CD4-positive, alpha-beta T cell (primary cell): ENCODE measurements at regions of chr7 and their contacts with region 1.

Region 1: DNA sequence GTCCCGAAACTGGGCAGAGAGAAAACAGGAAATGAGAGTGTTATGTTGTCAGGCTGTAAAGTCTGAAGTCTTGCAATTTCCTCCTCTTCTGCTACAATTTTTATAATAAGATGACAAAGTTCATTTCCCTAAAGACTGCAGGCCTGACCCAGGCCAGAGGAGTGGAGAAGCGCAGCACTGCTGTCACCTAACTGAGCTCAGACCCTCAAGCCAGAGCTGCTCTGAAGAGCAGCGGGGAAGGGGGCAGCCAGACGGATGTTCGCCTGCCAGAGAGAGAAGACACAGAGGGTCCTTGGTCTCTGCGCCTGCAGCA is 12.6 kb upstream of the AOAH start:
- DNase-seq: peak in 3 of 14 experiments; percentile 41 to 62 (median 58)
- ATAC-seq: peak; percentile 39
- H3K4me3 ChIP-seq: peak overlapping the region; percentile 1
- H3K4me3 Mint-ChIP-seq: no peak overlapping the region
- H3K27ac ChIP-seq: peak overlapping the region in 1 of 2 donors; percentile 4
- H3K27ac Mint-ChIP-seq: peak overlapping the region; percentile 61
- H3K4me1 ChIP-seq: peaks cover 13% of the 10 kb centered on the region
- H3K4me1 Mint-ChIP-seq: peaks cover 27% of the 10 kb centered on the region
- H3K27me3 ChIP-seq: no peaks in the 10 kb centered on the region
- H3K27me3 Mint-ChIP-seq: no peaks in the 10 kb centered on the region
- CTCF ChIP-seq: no peak

Region 2: GRCh38 chr7:36708767-36709166 is 28.1 kb before region 1 on chr7:
- CTCF ChIA-PET with region 1: no interaction called
- POLR2A ChIA-PET with region 1: no interaction called
- intact Hi-C with region 1: loop called in 1 of 2 experiments (anchors 1 kb)
- DNase-seq: no peak
- ATAC-seq: no peak
- H3K4me3 ChIP-seq: no peak overlapping the region
- H3K4me3 Mint-ChIP-seq: no peak overlapping the region
- H3K27ac ChIP-seq: no peak overlapping the region
- H3K27ac Mint-ChIP-seq: no peak overlapping the region
- H3K4me1 ChIP-seq: no peaks in the 10 kb centered on the region
- H3K4me1 Mint-ChIP-seq: peaks cover 41% of the 10 kb centered on the region
- H3K27me3 ChIP-seq: no peaks in the 10 kb centered on the region
- H3K27me3 Mint-ChIP-seq: no peaks in the 10 kb centered on the region
- CTCF ChIP-seq: no peak

Region 3: GRCh38 chr7:36777062-36777461 is 40.2 kb after region 1 on chr7:
- CTCF ChIA-PET with region 1: no interaction called
- POLR2A ChIA-PET with region 1: interaction called, 4 read pairs
- intact Hi-C with region 1: loop called in 1 of 2 experiments (anchors 5 kb)
- DNase-seq: peak; percentile 7 to 87 (median 38)
- ATAC-seq: peak; percentile 69
- H3K4me3 ChIP-seq: peak overlapping the region; percentile 22
- H3K4me3 Mint-ChIP-seq: peak overlapping the region; percentile 78
- H3K27ac ChIP-seq: peak overlapping the region; percentile 7 to 37
- H3K27ac Mint-ChIP-seq: peak overlapping the region; percentile 86
- H3K4me1 ChIP-seq: peaks cover 49% of the 10 kb centered on the region
- H3K4me1 Mint-ChIP-seq: peaks cover 78% of the 10 kb centered on the region
- H3K27me3 ChIP-seq: no peaks in the 10 kb centered on the region
- H3K27me3 Mint-ChIP-seq: no peaks in the 10 kb centered on the region
- CTCF ChIP-seq: no peak

Region 4: DNA sequence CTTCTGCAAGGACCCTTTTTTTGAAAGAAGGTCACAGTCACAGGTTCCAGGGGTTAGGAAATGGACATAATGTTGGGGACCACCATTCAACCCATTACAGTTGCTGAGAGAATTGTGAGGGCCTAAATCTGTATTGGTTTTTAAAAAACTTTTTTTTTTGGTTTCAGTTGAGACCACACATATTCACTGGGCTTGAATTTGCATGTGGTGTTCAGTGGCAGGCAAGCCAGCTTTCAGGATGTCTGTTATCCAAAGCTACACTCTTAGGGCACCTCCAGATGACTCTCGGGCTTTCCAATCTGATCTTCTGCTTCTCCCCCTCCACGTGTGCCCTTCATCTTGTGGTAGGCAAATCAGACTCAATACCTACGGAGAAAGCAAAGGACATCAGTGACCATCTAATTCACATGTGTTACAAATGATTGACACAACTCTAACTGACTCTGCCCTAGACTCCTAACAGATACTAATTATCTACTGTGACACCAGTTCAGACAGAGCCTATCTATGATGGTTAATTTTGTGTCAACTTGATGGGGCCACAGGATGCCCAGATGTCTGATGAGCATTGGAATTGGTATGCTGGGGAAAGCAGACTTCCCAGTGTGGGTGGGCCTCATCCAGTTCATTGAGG is 805.1 kb after region 1 on chr7:
- CTCF ChIA-PET with region 1: no interaction called
- POLR2A ChIA-PET with region 1: no interaction called
- intact Hi-C with region 1: no loop called
- DNase-seq: no peak
- ATAC-seq: no peak
- H3K4me3 ChIP-seq: no peak overlapping the region
- H3K4me3 Mint-ChIP-seq: no peak overlapping the region
- H3K27ac ChIP-seq: no peak overlapping the region
- H3K27ac Mint-ChIP-seq: no peak overlapping the region
- H3K4me1 ChIP-seq: no peaks in the 10 kb centered on the region
- H3K4me1 Mint-ChIP-seq: no peaks in the 10 kb centered on the region
- H3K27me3 ChIP-seq: no peaks in the 10 kb centered on the region
- H3K27me3 Mint-ChIP-seq: no peaks in the 10 kb centered on the region
- CTCF ChIP-seq: no peak